ENCODE measurements at regions of chr7 and their contacts with region 1.

Region 1: GRCh38 chr7:37448636-37449361 is at the start of gene ELMO1:
- DNase-seq: peak; percentile 85 to 89 (median 87)
- H3K4me3 ChIP-seq: peak within 1 kb of the TSS; percentile 74 to 94 (median 91)
- H3K4me3 Mint-ChIP-seq: peak within 1 kb of the TSS; percentile 93 to 96
- H3K27ac ChIP-seq: peak within 1 kb of the TSS; percentile 89 to 92
- H3K27ac Mint-ChIP-seq: peak within 1 kb of the TSS; percentile 86 to 98 (median 93)
- H3K4me1 ChIP-seq: peaks cover 47 to 50% of the 10 kb centered on the region in 2 donors
- H3K4me1 Mint-ChIP-seq: peaks cover 52% of the 10 kb centered on the region
- H3K27me3 ChIP-seq: no peaks in the 10 kb centered on the region
- H3K27me3 Mint-ChIP-seq: peaks cover 0 to 5% (median 2%) of the 10 kb centered on the region in 3 donors
- CTCF ChIP-seq: peak; percentile 66
- polyA plus RNA-seq, gene ELMO1: 46.6 to 50.2 (median 46.7) TPM

Region 2: GRCh38 chr7:37408291-37409228 is 40.2 kb before region 1 on chr7:
- intact Hi-C with region 1: loop called in 1 of 2 experiments (anchors 5 kb)
- DNase-seq: peak in 2 of 3 donors; percentile 36 to 44
- H3K4me3 ChIP-seq: peak overlapping the region; percentile 2 to 49 (median 13)
- H3K4me3 Mint-ChIP-seq: peak overlapping the region; percentile 48 to 82
- H3K27ac ChIP-seq: peak overlapping the region in 1 of 2 donors; percentile 63
- H3K27ac Mint-ChIP-seq: peak overlapping the region; percentile 68 to 85 (median 79)
- H3K4me1 ChIP-seq: peaks cover 49 to 57% of the 10 kb centered on the region in 2 donors
- H3K4me1 Mint-ChIP-seq: peaks cover 64% of the 10 kb centered on the region
- H3K27me3 ChIP-seq: no peaks in the 10 kb centered on the region
- H3K27me3 Mint-ChIP-seq: peaks cover 0 to 1% (median 0%) of the 10 kb centered on the region in 3 donors
- CTCF ChIP-seq: no peak

Region 3: GRCh38 chr7:37424995-37425394 is 23.8 kb before region 1 on chr7:
- intact Hi-C with region 1: loop called in 1 of 2 experiments (anchors 1 kb)
- DNase-seq: peak; percentile 49 to 61 (median 59)
- H3K4me3 ChIP-seq: peak overlapping the region in 2 of 3 experiments; percentile 27 to 53
- H3K4me3 Mint-ChIP-seq: peak overlapping the region; percentile 59 to 63
- H3K27ac ChIP-seq: peak overlapping the region; percentile 74 to 87
- H3K27ac Mint-ChIP-seq: peak overlapping the region; percentile 85 to 94 (median 91)
- H3K4me1 ChIP-seq: peaks cover 56 to 61% of the 10 kb centered on the region in 2 donors
- H3K4me1 Mint-ChIP-seq: peaks cover 51% of the 10 kb centered on the region
- H3K27me3 ChIP-seq: no peaks in the 10 kb centered on the region
- H3K27me3 Mint-ChIP-seq: no peaks in the 10 kb centered on the region
- CTCF ChIP-seq: no peak

Region 4: GRCh38 chr7:37495574-37496184 is 46.9 kb after region 1 on chr7:
- intact Hi-C with region 1: no loop called
- DNase-seq: peak in 2 of 3 donors; percentile 35 to 50
- H3K4me3 ChIP-seq: no peak overlapping the region
- H3K4me3 Mint-ChIP-seq: no peak overlapping the region
- H3K27ac ChIP-seq: no peak overlapping the region
- H3K27ac Mint-ChIP-seq: no peak overlapping the region
- H3K4me1 ChIP-seq: peaks cover 5% of the 10 kb centered on the region in 2 donors
- H3K4me1 Mint-ChIP-seq: peaks cover 9% of the 10 kb centered on the region
- H3K27me3 ChIP-seq: no peaks in the 10 kb centered on the region
- H3K27me3 Mint-ChIP-seq: peaks cover 0 to 6% (median 0%) of the 10 kb centered on the region in 3 donors
- CTCF ChIP-seq: peak; percentile 89

Region 5: DNA sequence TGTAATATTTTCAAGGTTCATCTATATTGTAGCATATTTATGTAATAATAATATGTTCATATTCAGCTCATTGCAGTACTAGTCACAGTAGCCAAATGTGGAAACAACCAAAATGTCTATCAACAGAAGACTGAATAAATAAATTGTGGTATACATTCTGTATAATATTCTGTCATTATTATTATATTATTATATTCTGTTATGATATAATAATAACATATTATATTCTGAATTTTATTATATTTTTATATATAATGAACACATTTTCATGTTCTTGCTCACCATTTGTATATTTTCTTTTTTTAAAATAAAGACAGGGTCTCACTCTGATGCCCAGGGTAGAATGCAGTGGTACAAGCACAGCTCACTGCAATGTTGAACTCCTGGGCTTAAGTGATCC is 638.1 kb after region 1 on chr7:
- intact Hi-C with region 1: no loop called
- DNase-seq: no peak
- H3K4me3 ChIP-seq: no peak overlapping the region
- H3K4me3 Mint-ChIP-seq: no peak overlapping the region
- H3K27ac ChIP-seq: no peak overlapping the region
- H3K27ac Mint-ChIP-seq: no peak overlapping the region
- H3K4me1 ChIP-seq: no peaks in the 10 kb centered on the region
- H3K4me1 Mint-ChIP-seq: no peaks in the 10 kb centered on the region
- H3K27me3 ChIP-seq: no peaks in the 10 kb centered on the region
- H3K27me3 Mint-ChIP-seq: peaks cover 0 to 3% (median 0%) of the 10 kb centered on the region in 3 donors
- CTCF ChIP-seq: no peak

Measured in CD14-positive monocyte (primary cell).